PC-9 (cell line): ENCODE measurements at regions of chr2 and their contacts with region 1.

Region 1: DNA sequence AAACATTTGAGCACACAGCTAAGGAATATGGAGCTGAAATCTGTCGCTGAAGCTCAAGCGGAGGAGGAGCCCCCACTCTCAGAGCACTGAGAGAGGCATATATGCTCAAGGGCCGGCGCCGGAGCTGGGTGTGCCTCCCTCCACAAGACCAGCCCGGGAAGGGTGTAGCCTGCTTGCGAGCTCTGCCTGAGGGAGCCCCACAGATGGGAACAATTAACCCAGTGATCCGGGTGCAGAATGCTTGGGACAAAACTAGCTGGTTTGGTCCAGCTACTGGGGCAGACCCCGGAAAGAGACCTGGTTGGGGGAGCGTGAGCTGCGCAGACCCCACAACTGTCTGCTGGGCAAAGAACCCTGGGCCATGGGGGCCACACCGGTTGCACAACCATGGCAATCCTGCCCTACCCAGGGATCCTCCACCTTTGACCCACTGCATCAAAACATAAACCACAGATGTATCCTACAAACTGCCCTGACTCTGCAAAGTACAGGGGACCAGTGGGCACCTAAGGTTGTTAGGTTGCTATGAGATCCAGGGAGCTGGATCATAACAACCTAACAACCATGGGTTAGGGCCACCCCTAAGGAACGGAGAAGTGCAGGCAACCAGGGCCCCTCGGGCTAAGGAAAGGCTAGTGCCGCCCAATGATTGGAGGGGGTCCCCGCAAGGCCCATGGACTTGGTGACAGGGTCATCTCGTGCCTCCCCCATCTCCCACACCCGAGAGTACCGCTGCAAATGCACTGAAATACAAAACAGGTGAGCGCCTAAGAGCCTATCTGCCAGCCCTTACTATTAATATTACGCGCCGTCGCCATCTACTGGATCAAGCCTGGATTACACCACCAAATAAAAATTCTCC is 53.4 kb upstream of the SCN1A start:
- DNase-seq: peak in 1 of 2 experiments; percentile 47
- H3K4me3 ChIP-seq: no peak overlapping the region
- H3K27ac ChIP-seq: no peak overlapping the region
- H3K4me1 ChIP-seq: no peaks in the 10 kb centered on the region
- H3K27me3 ChIP-seq: no peaks in the 10 kb centered on the region
- CTCF ChIP-seq: peak; percentile 71

Region 2: GRCh38 chr2:166234112-166234846 is 53.1 kb after region 1 on chr2:
- CTCF ChIA-PET with region 1: no interaction called
- POLR2A ChIA-PET with region 1: no interaction called
- intact Hi-C with region 1: loop called (anchors 5 kb)
- DNase-seq: no peak
- H3K4me3 ChIP-seq: no peak overlapping the region
- H3K27ac ChIP-seq: no peak overlapping the region
- H3K4me1 ChIP-seq: peaks cover 2% of the 10 kb centered on the region
- H3K27me3 ChIP-seq: no peaks in the 10 kb centered on the region
- CTCF ChIP-seq: no peak

Region 3: GRCh38 chr2:166375736-166376487 is 194.7 kb after region 1 on chr2 and contains the start of gene SCN9A:
- CTCF ChIA-PET with region 1: interaction called, 5 read pairs
- POLR2A ChIA-PET with region 1: no interaction called
- intact Hi-C with region 1: loop called (anchors 5 kb)
- DNase-seq: peak in 1 of 2 experiments; percentile 70
- H3K4me3 ChIP-seq: peak within 1 kb of the TSS; percentile 55
- H3K27ac ChIP-seq: no peak within 1 kb of the TSS
- H3K4me1 ChIP-seq: 0 out of 2 replicates have a peak, but pooled peaks cover 8% of the 10 kb centered on the region
- H3K27me3 ChIP-seq: no peaks in the 10 kb centered on the region
- CTCF ChIP-seq: no peak
- total RNA-seq, gene SCN9A: 3.4 and 5.2 TPM in 2 replicates

Region 4: DNA sequence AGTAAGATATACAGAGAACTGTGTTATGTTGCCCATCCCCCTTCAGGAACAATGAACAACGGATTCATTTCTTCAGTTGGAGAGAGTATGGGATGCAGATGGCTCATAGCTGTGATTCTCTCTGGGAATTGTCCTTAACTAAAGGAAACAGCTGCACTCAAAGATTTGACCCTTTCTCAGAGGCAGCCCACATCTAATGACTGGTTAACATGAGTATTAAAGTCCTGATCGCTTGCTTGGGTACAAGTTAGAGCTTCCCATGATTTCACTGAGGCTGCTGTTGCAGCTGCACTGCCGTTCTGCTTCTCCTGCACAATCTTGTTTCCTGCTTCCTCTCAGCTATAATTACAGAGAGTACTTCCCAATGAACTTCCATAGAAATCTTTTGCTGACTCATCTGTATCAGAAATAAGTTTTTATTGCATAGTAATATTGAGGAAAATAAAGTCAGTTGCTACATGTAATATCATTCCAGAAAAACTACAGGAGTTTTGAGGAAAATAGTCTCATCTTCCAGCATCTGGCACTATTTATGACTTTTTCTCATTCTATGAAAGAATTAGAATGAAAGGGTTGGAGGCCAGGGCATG is 207.4 kb after region 1 on chr2:
- CTCF ChIA-PET with region 1: no interaction called
- POLR2A ChIA-PET with region 1: no interaction called
- intact Hi-C with region 1: no loop called
- DNase-seq: no peak
- H3K4me3 ChIP-seq: no peak overlapping the region
- H3K27ac ChIP-seq: no peak overlapping the region
- H3K4me1 ChIP-seq: no peaks in the 10 kb centered on the region
- H3K27me3 ChIP-seq: no peaks in the 10 kb centered on the region
- CTCF ChIP-seq: no peak

Region 5: GRCh38 chr2:166417669-166418068 is 236.5 kb after region 1 on chr2:
- CTCF ChIA-PET with region 1: interaction called, 3 read pairs
- POLR2A ChIA-PET with region 1: no interaction called
- intact Hi-C with region 1: loop called (anchors 1 kb)
- DNase-seq: no peak
- H3K4me3 ChIP-seq: no peak overlapping the region
- H3K27ac ChIP-seq: no peak overlapping the region
- H3K4me1 ChIP-seq: no peaks in the 10 kb centered on the region
- H3K27me3 ChIP-seq: no peaks in the 10 kb centered on the region
- CTCF ChIP-seq: no peak

Region 6: GRCh38 chr2:166516712-166517303 is 335.6 kb after region 1 on chr2:
- CTCF ChIA-PET with region 1: no interaction called
- POLR2A ChIA-PET with region 1: no interaction called
- intact Hi-C with region 1: loop called (anchors 2 kb)
- DNase-seq: no peak
- H3K4me3 ChIP-seq: no peak overlapping the region
- H3K27ac ChIP-seq: no peak overlapping the region
- H3K4me1 ChIP-seq: no peaks in the 10 kb centered on the region
- H3K27me3 ChIP-seq: no peaks in the 10 kb centered on the region
- CTCF ChIP-seq: peak; percentile 46